Activated T-helper 1 cell treated with anti-CD3 and anti-CD28 coated beads, Interleukin-12 subunit alpha, Interleukin-12 subunit beta, Interleukin-2, Interleukin-4 antibody, amounts not matched to agents 30 ng/mL and 10 ng/mL and 1 ng/mL, durations not matched to agents 14 hours and 24 hours and 36 hours (primary cell): ENCODE measurements at regions of chr5 and their contacts with region 1.

Region 1: DNA sequence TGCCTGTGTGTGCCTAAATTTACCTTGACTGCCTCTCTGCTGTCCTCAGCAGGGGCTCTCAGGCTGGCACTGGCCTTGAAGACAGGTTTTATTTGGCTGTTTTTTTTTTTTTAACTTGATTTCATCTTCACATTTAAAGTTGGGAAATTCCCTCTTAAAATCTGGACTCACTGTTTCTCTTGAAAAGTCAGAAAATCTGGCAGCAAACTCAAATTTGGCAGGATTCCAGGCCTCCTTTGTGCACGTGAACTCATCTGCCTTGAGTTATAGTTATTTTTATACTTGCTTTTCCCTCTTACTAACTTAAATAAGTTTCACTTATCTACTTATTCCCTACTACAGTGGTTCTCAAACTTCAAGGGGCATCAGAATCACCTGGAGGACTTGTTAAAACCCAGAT is 118.4 kb upstream of the MAP3K1 start:
- DNase-seq: no peak
- H3K4me3 Mint-ChIP-seq: no peak overlapping the region
- H3K27ac Mint-ChIP-seq: no peak overlapping the region
- H3K4me1 Mint-ChIP-seq: peaks cover 79% of the 10 kb centered on the region
- H3K27me3 Mint-ChIP-seq: peaks cover 3% of the 10 kb centered on the region

Region 2: GRCh38 chr5:56610093-56610698 is 86.7 kb before region 1 on chr5:
- intact Hi-C with region 1: loop called (anchors 1 kb)
- DNase-seq: peak; percentile 49
- H3K4me3 Mint-ChIP-seq: peak overlapping the region; percentile 48
- H3K27ac Mint-ChIP-seq: peak overlapping the region; percentile 81
- H3K4me1 Mint-ChIP-seq: peaks cover 89% of the 10 kb centered on the region
- H3K27me3 Mint-ChIP-seq: peaks cover 3% of the 10 kb centered on the region

Region 3: DNA sequence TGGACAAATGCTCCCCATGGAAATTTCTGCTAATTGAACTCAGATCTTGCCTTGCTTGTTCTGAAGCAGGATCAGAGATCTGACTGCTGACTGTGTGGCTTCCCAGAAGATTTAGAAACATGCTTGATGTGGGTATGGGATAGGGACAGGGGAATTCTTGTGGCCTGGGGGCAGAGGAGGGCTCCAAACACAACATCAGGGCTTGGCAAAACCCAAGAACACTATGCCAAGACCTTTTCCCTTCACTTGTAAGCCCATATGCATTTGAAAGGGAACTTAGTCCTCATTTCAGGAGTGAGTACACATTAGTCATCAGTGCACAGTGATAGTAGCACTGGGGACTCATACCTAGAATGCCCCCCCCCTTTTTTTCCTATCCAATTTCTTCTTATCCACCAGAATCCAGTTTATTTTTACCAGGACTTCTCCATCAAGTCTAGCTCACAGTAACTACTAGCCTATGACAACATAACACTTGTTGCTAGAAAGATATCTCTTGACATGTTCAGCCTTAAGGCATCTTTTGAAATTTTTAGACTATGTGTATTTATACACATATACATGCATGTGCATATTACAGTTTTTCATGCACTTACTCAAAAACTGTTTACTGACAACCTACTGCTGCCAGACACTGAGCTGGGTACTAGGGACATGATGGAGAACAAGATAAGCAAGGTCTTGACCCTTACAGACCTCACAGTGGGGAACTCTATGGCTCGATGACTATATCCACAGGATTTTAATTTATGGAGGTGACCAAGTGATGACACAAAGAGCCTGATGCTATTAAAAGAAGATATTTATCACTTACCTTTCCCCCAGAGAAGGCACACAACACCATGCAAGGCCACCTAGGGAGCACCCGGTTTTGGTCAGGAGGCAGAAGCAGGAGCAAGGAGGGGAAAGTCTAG is 39.8 kb before region 1 on chr5:
- intact Hi-C with region 1: loop called (anchors 5 kb)
- DNase-seq: no peak
- H3K4me3 Mint-ChIP-seq: no peak overlapping the region
- H3K27ac Mint-ChIP-seq: no peak overlapping the region
- H3K4me1 Mint-ChIP-seq: peaks cover 10% of the 10 kb centered on the region
- H3K27me3 Mint-ChIP-seq: peaks cover 20% of the 10 kb centered on the region

Region 4: DNA sequence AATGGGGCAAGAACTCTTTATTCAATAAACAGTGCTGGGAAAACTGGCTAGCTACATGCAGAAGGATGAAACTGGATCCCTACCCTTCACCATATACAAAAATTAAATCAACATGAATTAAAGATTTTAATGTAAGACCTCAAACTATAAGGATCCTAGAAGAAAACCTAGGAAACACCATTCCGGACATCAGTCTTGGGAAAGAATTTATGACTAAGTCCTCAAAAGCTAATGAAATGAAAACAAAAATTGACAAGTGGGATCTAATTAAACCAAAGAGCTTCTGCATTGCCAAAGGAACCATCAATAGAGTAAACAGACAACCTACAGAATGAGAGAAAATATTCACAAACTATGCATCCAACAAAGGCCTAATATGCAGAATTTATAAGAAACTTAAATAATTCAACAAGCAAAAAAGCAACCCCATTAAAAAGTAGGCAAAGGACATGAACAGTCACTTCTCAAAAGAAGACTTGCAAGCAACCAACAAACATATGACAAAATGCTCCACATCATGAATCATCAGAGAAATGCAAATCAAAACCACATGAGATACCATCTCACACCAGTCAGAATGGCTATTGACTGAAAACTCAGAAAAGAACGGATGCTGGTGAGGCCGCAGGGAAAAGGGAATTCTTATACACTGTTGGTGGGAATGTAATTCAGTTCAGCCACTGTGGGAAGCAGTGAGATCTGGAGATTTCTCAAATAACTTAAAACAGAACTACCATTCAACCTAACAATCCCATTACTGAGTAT is 14.1 kb after region 1 on chr5:
- intact Hi-C with region 1: loop called (anchors 1 kb)
- DNase-seq: no peak
- H3K4me3 Mint-ChIP-seq: no peak overlapping the region
- H3K27ac Mint-ChIP-seq: no peak overlapping the region
- H3K4me1 Mint-ChIP-seq: peaks cover 29% of the 10 kb centered on the region
- H3K27me3 Mint-ChIP-seq: peaks cover 9% of the 10 kb centered on the region

Region 5: GRCh38 chr5:56725711-56726411 is 29.0 kb after region 1 on chr5:
- intact Hi-C with region 1: no loop called
- DNase-seq: no peak
- H3K4me3 Mint-ChIP-seq: no peak overlapping the region
- H3K27ac Mint-ChIP-seq: no peak overlapping the region
- H3K4me1 Mint-ChIP-seq: no peaks in the 10 kb centered on the region
- H3K27me3 Mint-ChIP-seq: peaks cover 5% of the 10 kb centered on the region